ENCODE measurements at regions of chr18 and their contacts with region 1.

Region 1: DNA sequence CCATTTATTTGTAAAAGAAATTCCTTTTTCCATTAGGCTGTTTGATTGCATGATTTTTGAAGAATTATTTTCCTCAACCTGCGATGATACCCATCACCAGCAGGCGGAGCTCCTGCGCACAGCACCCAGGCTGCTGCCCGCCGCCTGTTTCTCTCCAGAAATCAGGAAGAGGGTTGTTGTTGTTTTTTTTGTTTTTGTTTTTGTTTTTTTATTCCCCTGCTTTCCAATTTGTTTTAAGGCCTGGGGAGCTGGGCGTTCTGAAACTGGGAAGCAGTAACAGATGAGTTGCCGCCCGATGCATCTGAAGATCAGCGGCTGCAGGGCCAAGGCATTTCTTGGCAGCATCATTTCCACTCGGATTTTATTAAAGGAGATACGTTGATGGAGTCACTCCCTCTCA is 132.1 kb downstream of the MBP start:
- DNase-seq: peak; percentile 70
- ATAC-seq: no peak
- H3K4me3 Mint-ChIP-seq: no peak overlapping the region
- H3K27ac Mint-ChIP-seq: peak overlapping the region; percentile 17
- H3K4me1 Mint-ChIP-seq: peaks cover 21% of the 10 kb centered on the region
- H3K27me3 Mint-ChIP-seq: no peaks in the 10 kb centered on the region

Region 2: DNA sequence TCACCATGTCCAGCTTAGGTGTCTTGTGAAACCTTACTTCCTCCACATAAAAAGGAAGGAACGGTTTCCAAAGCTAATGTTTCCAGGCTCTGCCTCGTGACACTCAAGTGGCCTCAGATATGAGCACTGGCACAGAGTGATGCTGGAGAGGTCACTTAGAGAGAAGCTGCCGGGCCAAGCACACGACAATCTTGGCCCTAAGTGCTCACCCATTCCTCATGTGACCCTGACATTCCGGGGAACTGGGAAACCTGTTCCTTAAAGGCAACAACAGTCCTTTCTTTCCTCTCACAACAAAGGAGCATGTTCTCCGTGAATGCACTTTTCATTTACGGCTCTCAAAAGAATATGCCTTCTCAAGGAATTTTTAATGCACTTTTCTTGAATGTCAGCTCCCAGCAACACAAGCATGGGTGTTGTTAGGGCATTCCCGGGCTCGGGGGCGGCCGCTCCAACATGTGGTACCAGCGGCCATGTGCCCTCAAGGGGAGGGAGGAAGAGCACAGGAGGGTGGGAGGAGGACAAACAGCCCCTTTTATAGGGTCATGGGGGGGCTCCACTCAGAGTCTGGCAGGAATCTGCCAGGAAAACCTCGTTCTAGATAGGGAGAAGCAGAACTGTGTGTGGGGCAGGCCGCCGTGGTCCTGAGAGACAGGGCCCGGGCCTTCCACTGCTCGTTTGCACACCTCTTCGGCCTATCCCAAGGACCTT is 13.4 kb after region 1 on chr18:
- CTCF ChIA-PET with region 1: interaction called, 15 read pairs
- POLR2A ChIA-PET with region 1: no interaction called
- intact Hi-C with region 1: no loop called
- DNase-seq: no peak
- ATAC-seq: no peak
- H3K4me3 Mint-ChIP-seq: no peak overlapping the region
- H3K27ac Mint-ChIP-seq: no peak overlapping the region
- H3K4me1 Mint-ChIP-seq: peaks cover 9% of the 10 kb centered on the region
- H3K27me3 Mint-ChIP-seq: no peaks in the 10 kb centered on the region

Region 3: DNA sequence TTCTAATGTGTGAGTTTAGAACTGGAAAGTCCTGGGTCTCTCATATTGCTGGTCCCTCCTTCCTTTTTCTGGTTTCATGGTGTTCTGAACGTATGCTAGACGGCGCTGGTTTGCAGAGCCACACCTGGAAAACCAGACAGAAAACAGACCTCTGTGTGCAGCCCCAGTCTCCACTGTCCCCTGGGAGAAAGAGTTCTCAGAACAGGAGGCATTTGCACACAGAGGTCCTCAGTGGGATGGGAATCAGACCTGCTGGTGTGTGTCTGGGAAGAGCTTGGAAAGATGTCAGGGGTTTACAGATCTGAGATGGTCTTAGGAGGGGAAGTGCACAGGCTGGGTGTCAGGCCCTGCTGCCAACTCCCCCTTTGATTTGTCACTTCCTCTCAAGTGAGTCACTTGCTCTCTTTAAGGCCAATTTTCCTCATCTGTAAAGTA is 146.9 kb after region 1 on chr18:
- CTCF ChIA-PET with region 1: interaction called, 3 read pairs
- POLR2A ChIA-PET with region 1: no interaction called
- intact Hi-C with region 1: loop called in 1 of 2 experiments (anchors 5 kb)
- DNase-seq: peak; percentile 46
- ATAC-seq: peak; percentile 89
- H3K4me3 Mint-ChIP-seq: peak overlapping the region; percentile 33
- H3K27ac Mint-ChIP-seq: peak overlapping the region; percentile 84
- H3K4me1 Mint-ChIP-seq: peaks cover 43% of the 10 kb centered on the region
- H3K27me3 Mint-ChIP-seq: no peaks in the 10 kb centered on the region